ENCODE measurements at regions of chr9 and their contacts with region 1.

Region 1: DNA sequence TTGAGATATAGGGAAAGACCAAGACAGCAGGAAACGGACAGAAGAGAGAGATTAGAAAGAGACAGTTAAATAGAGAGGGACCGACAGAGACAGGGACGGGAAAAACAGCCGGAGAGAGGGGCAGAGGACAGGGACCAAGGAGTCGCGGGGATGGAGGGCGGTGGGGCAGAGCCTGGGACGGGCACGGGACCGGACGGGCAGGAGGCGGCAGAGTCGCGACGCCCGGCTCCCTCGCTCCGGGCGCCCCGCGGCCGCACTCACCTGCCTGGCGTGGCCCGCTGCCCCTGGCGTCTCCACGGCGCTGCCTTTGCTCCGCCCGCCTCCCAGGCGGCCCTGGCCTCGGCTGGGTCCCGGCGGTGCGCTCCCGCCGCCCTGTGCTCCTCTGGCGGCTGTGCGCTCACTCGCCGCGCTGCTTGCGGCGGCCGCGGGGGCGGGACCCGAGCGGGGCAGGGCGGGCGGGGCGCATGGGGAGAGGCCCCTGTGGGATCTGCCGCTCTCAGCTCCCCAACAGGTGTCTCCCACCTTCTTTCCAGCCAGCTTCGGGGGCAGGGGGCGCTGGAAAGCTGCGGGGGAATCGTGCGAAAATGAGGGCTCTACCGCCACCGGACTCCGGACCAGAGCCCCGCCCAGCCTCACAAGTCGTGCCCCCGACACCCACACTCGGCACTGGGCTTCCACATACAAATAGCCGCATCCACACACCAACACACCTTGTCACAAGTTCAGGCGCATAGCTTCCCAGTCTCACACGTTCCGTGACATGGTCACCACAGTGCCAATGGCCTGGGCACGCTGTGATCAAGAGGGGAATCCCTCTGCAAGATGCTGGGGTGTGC is at the start of gene ARID3C:
- DNase-seq: no peak
- ATAC-seq: peak; percentile 21
- total RNA-seq, gene ARID3C: 1.2 TPM

Region 2: GRCh38 chr9:34611829-34612630 is 16.8 kb before region 1 on chr9 and contains the start of gene RPP25L:
- intact Hi-C with region 1: loop called (anchors 2 kb)
- DNase-seq: peak; percentile 92
- ATAC-seq: peak; percentile 97
- total RNA-seq, gene RPP25L: 17.0 TPM